H1 (cell line): ENCODE measurements at regions of chr14 and their contacts with region 1.

Region 1: DNA sequence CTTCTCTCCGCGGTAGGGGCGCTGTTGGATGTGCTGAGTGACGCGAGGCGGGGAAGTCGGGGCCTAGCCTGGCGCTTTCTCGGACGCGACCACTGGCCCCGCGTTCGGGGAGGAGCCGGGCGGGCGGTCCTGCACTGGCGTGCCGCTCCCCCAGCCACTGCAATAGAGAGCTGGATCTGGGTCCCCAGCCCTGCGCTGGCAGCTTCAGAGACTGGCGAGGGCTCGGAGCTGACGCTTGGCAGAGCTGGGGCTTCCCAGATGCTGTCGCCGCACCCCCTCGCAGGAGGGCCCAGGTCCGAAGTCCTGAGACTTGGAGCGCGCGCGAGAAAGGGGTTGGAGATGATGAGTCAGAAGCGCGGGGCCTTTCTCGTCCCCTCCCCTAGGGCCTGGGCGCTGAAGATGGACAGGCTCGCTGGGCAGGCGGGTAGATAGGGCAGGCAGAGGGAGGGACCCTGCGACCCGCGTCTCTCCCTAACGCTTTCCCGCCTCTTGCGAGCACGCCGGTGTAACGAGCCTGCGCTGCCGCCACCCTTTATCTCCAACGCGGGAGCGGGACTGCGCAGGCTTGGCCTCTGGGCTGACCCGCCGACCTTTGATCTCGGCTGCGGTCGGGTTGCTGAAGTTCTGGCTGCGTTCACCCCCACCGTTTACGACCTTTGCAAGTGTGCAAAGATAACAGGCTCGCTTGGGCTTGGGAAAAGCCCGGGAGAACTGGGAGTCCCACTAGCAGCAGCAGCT is 3.0 kb downstream of the TMEM253 start:
- DNase-seq: peak; percentile 80 to 96
- H3K4me3 ChIP-seq: peak overlapping the region; percentile 49 to 83 (median 80)
- H3K27ac ChIP-seq: peak overlapping the region; percentile 99
- H3K4me1 ChIP-seq: peaks cover 2 to 25% (median 9%) of the 10 kb centered on the region in 4 experiments; a peak in 5 of 7 replicates
- H3K27me3 ChIP-seq: no peaks in the 10 kb centered on the region
- CTCF ChIP-seq: peak; percentile 70 to 86 (median 75)
- EP300 ChIP-seq: peak in 1 of 2 experiments; percentile 99; a peak in 2 of 3 replicates
- POLR2A ChIP-seq: peak; percentile 88 to 93
- RAD21 ChIP-seq: peak; percentile 9 to 33; a peak in 3 of 4 replicates

Region 2: DNA sequence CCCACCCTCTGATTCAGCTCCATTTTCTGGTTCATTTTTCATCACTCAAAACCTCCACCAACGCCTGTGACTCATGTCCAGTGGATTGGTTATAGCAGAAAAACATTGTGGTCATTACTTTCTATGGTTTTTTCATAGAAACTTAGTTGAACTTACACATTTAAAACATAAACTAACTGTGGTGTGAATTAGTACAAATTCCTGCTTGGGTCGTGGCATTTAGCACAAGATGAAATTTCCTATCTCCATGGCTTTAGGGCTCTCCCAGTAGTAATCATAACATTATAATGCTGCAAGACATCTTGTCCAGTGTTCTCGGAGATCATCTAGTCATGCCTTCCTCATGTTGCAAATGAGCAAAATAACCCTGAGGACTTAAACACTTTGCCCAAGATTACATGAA is 54.6 kb before region 1 on chr14:
- CTCF ChIA-PET with region 1: interaction called, 21 read pairs
- POLR2A ChIA-PET with region 1: no interaction called
- DNase-seq: no peak
- H3K4me3 ChIP-seq: no peak overlapping the region
- H3K27ac ChIP-seq: no peak overlapping the region
- H3K4me1 ChIP-seq: peaks cover 0 to under 1% (median 0%) of the 10 kb centered on the region in 4 experiments; a peak in 1 of 7 replicates
- H3K27me3 ChIP-seq: no peaks in the 10 kb centered on the region
- CTCF ChIP-seq: no peak
- EP300 ChIP-seq: no peak
- POLR2A ChIP-seq: no peak
- RAD21 ChIP-seq: no peak

Region 3: GRCh38 chr14:21078287-21078686 is 25.6 kb before region 1 on chr14:
- CTCF ChIA-PET with region 1: interaction called, 148 read pairs
- POLR2A ChIA-PET with region 1: interaction called, 148 read pairs
- DNase-seq: no peak
- H3K4me3 ChIP-seq: no peak overlapping the region
- H3K27ac ChIP-seq: no peak overlapping the region
- H3K4me1 ChIP-seq: no peaks in the 10 kb centered on the region
- H3K27me3 ChIP-seq: no peaks in the 10 kb centered on the region
- CTCF ChIP-seq: no peak
- EP300 ChIP-seq: no peak
- POLR2A ChIP-seq: no peak
- RAD21 ChIP-seq: no peak